ENCODE measurements at regions of chr6 and their contacts with region 1.

Region 1: DNA sequence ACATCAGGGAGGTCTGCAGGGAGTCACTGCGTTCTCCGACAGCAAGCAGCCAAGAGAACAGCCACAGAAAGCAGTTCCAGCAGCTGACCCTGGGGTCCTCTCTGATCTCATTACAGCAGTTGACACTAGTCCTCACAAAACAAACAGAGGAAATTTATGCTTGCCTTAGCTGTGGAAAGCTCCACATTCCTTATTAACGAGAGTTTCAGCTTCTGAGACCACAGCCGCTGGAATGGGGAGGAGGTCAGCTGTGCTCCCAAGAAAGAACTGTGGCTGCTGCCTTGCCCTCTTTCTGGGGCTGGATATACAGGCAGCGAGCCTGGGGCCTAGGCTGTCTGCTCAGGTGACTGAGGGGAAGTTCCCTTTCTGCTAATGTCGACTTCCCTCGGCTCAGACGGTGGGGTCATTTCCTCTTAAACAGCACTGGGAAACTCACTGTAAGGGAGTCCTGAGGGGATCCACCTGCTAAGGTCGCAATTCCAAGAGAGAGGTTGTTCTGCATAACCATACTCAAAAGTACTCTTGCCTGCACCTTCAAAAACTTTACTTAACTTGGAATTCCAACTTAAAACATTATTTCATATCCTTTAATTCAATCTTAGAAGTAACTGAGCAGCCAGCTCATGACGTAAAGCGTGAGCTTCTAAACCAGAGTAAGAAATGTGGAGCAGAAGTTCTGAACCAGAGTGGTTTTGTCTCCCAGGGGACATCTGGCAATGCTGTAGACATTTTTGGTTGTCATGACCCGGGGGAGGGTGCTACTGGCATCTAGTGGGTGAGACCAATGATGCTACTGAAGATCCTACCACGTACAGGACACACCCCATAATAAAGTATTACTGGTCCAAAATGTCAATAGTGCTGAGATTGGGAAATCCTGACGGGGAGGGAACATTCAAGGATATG is 80.3 kb downstream of the BACH2 start:
- DNase-seq: peak; percentile 34 to 76 (median 63)
- ATAC-seq: peak; percentile 36 to 64
- H3K4me3 Mint-ChIP-seq: peak overlapping the region in 8 of 10 donors; percentile 52 to 79 (median 71)
- H3K27ac Mint-ChIP-seq: no peak overlapping the region
- H3K4me1 Mint-ChIP-seq: peaks cover 24 to 37% (median 31%) of the 10 kb centered on the region in 4 donors
- H3K27me3 Mint-ChIP-seq: no peaks in the 10 kb centered on the region

Region 2: DNA sequence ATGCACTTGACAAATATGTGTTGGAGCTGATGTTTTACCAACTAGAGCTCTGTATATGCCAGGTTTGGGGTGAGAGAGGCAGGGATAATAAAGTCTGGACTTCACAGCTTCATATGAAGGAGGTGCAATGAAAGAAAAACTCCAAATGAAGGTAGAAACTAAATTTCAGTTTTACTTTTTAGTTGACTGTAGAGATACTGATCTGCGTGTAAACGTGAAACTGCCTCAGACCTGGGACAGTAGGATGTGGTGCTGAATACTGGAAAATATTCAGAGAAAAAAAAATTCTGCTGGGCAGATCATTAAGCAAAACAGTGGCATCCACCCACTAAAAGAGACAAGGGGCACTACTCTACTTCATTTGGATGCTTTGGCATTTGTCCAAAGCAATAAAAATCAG is 14.2 kb before region 1 on chr6:
- POLR2A ChIA-PET with region 1: interaction called, 16 read pairs
- DNase-seq: no peak
- ATAC-seq: peak; percentile 38 to 51
- H3K4me3 Mint-ChIP-seq: peak overlapping the region; percentile 2 to 75 (median 60)
- H3K27ac Mint-ChIP-seq: peak overlapping the region; percentile 31 to 91 (median 84)
- H3K4me1 Mint-ChIP-seq: peaks cover 34 to 88% (median 82%) of the 10 kb centered on the region in 4 donors
- H3K27me3 Mint-ChIP-seq: no peaks in the 10 kb centered on the region

Region 3: DNA sequence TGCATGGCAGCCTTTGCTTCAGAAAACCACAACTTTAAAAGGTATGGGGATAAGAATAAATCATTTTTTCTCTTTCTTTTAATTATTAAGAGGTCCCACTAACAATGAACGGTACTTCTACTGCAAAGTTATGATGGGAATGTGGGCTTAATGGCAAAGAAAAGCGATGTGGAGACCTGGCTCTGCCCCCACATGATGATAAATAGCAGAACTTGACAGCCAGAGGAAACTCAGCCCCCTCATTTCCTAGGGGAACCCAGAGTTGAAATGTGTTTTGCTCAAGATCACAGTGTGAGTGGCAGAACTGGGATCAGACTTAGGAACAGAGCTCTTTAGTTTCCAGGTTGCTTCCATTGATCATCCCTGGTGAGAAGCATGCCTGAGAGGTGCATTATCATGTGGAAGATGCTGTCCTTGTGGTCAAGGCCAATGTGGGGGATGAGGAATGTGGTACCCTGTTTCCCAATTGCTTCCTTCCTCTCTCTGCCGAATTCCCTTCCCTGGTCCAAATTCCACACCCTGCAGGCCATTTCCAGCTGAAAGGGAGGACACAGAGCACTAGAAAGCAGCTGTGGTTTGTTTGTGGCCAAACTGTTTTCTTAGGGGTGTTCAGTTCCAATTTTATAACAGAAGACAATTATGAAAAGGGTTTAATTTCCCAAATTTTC is 14.4 kb after region 1 on chr6:
- POLR2A ChIA-PET with region 1: interaction called, 11 read pairs
- DNase-seq: no peak
- ATAC-seq: no peak
- H3K4me3 Mint-ChIP-seq: peak overlapping the region in 9 of 10 donors; percentile 16 to 85 (median 61)
- H3K27ac Mint-ChIP-seq: peak overlapping the region; percentile 92 to 99 (median 96)
- H3K4me1 Mint-ChIP-seq: peaks cover 65 to 100% (median 97%) of the 10 kb centered on the region in 4 donors
- H3K27me3 Mint-ChIP-seq: no peaks in the 10 kb centered on the region

Region 4: DNA sequence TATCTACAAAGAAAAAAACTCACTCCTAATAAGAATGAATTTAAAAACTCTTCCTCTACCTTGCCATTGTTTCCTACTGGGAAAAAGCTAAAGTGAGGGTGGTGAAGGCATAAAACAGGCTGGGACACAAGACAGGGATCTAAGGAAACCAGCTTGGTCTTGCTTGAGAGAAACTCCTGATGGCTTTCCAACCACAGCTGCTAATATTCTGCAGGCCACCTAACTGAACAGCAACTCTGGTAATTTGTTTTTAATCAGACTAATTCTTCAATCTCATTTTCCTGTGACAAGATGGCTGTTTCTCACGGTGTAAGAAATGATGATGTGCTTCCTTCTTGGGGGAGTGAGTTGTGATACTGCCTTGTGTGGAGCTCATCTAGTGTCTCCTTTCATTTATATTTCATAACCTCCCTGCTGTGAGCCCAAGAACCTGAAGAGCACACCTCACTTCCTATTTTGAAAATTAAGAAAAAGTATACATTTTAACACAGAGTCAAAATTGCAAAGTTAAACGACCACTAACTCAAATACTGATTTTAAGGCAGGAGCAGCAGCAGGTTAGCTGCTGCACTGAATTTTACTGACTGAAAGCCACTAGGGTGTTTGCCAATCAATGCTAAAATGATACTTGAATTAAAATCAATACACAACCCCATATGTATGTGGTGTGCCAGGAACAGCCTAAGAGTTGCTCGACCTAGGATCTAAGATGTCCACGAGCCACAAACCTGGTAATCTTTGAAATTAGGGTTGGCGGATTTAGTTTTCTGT is 22.4 kb after region 1 on chr6:
- POLR2A ChIA-PET with region 1: interaction called, 18 read pairs
- DNase-seq: peak in 2 of 10 donors; percentile 42 to 43
- ATAC-seq: peak in 1 of 2 donors; percentile 26
- H3K4me3 Mint-ChIP-seq: peak overlapping the region; percentile 14 to 70 (median 56)
- H3K27ac Mint-ChIP-seq: peak overlapping the region; percentile 91 to 99 (median 94)
- H3K4me1 Mint-ChIP-seq: peaks cover 37 to 84% (median 79%) of the 10 kb centered on the region in 4 donors
- H3K27me3 Mint-ChIP-seq: no peaks in the 10 kb centered on the region